ENCODE measurements at regions of chr6 and their contacts with region 1.

Region 1: GRCh38 chr6:227074-227782 is 65.1 kb upstream of the DUSP22 start:
- DNase-seq: peak; percentile 65
- CTCF ChIP-seq: peak; percentile 42

Region 2: DNA sequence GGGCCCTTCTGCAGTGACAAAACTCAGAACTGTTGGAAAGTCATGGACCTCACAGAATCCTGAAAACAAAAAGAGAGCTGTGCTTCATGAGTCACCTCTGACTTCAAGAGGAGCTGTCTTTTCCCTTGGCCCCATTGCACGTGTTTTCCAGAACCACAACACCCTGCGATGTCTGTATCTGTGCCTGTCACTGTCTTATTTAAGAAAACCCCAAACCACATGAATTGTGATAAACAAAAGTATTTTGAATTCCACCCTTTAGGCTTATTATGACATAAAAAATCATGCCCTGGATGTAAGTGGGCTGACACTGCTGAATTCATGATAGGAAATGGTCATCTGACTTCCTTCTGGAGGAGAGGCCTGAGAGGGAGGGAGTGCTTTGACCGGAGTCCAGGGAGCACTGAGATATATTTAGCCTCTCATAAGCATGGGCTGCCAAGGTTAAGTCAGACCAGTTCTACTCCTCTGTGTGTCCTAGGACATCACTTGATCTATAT is 31.3 kb before region 1 on chr6:
- CTCF ChIA-PET with region 1: interaction called, 620 read pairs
- POLR2A ChIA-PET with region 1: interaction called, 10 read pairs
- DNase-seq: no peak
- CTCF ChIP-seq: no peak

Region 3: GRCh38 chr6:241096-241865 is 14.1 kb after region 1 on chr6:
- CTCF ChIA-PET with region 1: interaction called, 10 read pairs
- POLR2A ChIA-PET with region 1: no interaction called
- DNase-seq: no peak
- CTCF ChIP-seq: no peak

Region 4: DNA sequence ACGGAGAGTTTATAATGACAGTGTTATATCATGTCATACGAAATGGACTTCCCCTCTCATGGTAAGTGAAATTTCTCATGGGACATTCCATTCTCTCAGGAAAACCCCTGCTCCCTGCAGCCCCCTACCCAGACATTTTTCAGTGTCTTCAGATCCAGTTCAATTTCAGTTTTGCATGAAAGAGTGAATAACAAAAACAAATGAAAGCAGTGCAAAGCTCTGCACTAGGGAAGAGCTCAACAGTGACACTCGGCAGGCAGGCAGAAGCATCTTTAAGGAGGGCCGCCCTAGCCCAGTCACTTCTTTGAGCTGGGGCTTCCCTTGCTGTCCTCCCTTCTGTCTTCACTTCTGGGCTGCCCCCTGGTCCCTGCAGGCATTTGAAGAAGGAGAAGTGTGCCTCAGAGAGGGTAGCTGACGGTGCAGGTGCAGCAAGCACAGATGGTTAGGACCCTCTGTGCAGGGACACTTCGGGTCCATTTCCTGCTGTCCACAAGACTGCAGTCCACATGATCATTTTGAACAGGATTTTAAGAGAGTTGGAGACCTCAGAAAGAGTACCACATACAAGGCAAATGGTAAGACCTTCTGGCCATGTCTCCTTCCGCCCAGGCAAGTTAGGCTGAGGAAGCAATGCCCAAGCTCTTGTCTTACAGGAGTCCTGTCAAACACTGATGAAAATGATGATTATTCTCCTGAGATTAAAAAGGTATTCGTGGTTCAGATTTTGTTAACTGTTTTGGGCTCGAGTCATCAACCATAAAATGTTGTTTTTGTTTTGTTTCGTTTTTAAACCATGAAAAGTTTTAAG is 59.7 kb after region 1 on chr6:
- CTCF ChIA-PET with region 1: interaction called, 11 read pairs
- POLR2A ChIA-PET with region 1: no interaction called
- DNase-seq: peak; percentile 67
- CTCF ChIP-seq: no peak

Region 5: DNA sequence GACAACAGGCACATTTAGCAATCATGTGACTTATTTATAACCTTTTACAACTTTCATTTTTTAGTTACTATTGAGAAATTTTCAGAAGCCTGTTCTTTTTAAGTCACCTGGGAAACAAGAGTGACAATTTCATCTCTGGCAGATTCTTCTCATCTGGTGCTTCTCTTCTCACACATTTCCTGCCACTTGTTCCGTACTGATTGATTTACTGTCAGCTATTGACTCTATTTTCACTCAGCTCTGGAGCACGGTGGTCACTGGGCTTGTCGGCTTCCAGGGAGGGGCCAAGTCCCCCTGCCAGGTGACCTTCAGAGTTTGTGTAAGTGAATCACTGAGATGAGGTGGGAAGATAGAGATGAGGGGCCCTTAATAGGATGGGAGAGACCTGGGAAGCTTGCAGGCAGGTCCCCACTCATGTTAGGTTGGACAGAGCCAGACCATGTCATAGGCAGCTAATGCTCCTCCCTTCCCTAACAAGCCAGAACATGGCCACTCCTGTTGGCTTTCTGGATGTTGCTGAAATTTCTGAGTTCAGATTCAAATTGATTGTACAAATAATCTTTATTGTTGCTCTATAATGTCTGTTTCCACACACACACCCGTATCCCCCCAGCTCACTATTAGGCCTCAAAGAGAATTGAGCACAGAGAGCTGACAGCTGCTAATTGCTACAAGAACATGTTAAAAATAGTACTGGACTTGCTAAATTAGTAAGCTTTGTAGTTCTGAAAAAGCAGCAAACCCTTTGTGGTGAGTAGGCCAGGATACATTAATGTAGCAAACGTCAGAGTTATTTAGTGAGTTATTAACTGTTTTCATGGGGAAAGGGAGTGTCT is 78.4 kb after region 1 on chr6:
- CTCF ChIA-PET with region 1: interaction called, 17 read pairs
- POLR2A ChIA-PET with region 1: interaction called, 4 read pairs
- DNase-seq: peak; percentile 93
- CTCF ChIP-seq: no peak

Region 6: GRCh38 chr6:319177-320131 is 92.2 kb after region 1 on chr6:
- CTCF ChIA-PET with region 1: interaction called, 23 read pairs
- POLR2A ChIA-PET with region 1: interaction called, 3 read pairs
- DNase-seq: peak; percentile 82
- CTCF ChIP-seq: no peak

Region 7: GRCh38 chr6:364609-365540 is 137.6 kb after region 1 on chr6:
- CTCF ChIA-PET with region 1: interaction called, 11 read pairs
- POLR2A ChIA-PET with region 1: no interaction called
- DNase-seq: peak; percentile 79
- CTCF ChIP-seq: no peak